ENCODE measurements at regions of chr10 and their contacts with region 1.

Region 1: GRCh38 chr10:102777736-102778453 is 34.1 kb downstream of the WBP1L start:
- DNase-seq: no peak

Region 2: DNA sequence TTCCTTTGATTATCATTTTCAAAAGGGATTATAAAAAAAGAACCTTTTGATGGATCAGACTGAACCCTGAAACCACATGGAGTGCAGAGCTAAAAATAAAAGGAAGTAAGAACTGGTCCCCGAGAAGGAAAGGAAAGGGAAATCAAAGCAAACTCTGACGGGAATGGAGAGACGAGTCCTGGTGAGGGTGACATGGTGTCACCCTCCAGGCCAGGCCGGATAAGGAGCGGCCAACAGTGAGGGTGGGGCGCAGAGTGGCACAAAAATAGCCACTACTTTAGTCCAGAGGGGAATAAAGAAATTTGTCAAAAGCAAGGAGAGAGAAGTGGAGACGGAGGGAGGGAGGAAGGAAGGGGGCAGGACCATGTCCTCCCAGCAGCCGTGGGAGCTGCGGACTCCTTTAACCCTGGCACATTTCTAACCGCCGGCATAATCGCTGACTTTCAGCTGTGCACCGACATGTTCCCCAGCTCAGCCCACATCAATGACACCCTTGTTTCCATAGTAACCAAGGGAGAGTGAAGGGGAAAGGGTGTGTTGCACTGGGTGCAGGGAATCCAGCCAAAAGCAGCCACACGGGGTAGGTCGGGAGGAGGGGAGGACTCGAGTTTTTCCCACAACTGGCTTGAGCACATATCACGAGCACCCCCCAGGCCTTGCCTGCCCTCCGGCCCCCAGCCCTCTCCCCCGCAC is 103.9 kb before region 1 on chr10:
- intact Hi-C with region 1: no loop called
- DNase-seq: peak; percentile 87

Region 3: GRCh38 chr10:102752934-102753664 is 24.8 kb before region 1 on chr10:
- intact Hi-C with region 1: loop called in 1 of 2 experiments (anchors 1 kb)
- DNase-seq: no peak

Region 4: GRCh38 chr10:103316087-103316486 is 538.2 kb after region 1 on chr10:
- intact Hi-C with region 1: no loop called
- DNase-seq: no peak